ENCODE measurements at regions of chr6 and their contacts with region 1.

Region 1: GRCh38 chr6:6870921-6871320 is 236.8 kb upstream of the RREB1 start:
- DNase-seq: no peak
- H3K4me3 ChIP-seq: no peak overlapping the region
- H3K27ac ChIP-seq: no peak overlapping the region
- H3K4me1 ChIP-seq: no peaks in the 10 kb centered on the region
- H3K27me3 ChIP-seq: no peaks in the 10 kb centered on the region
- CTCF ChIP-seq: no peak

Region 2: GRCh38 chr6:7219310-7219709 is 348.4 kb after region 1 on chr6:
- CTCF ChIA-PET with region 1: interaction called, 15 read pairs
- dilution Hi-C with region 1: no loop called
- in situ Hi-C with region 1: no loop called
- intact Hi-C with region 1: no loop called
- DNase-seq: peak; percentile 28
- H3K4me3 ChIP-seq: no peak overlapping the region
- H3K27ac ChIP-seq: no peak overlapping the region
- H3K4me1 ChIP-seq: peaks cover 42% of the 10 kb centered on the region
- H3K27me3 ChIP-seq: no peaks in the 10 kb centered on the region
- CTCF ChIP-seq: no peak